H1 (cell line): ENCODE measurements at regions of chr2 and their contacts with region 1.

Region 1: GRCh38 chr2:203814661-203815540 is 52.7 kb upstream of the CTLA4 start:
- DNase-seq: no peak
- H3K4me3 ChIP-seq: no peak overlapping the region
- H3K27ac ChIP-seq: no peak overlapping the region
- H3K4me1 ChIP-seq: no peaks in the 10 kb centered on the region
- H3K27me3 ChIP-seq: no peaks in the 10 kb centered on the region
- CTCF ChIP-seq: peak in 2 of 3 experiments; percentile 60 to 79; a peak in 3 of 4 replicates
- EP300 ChIP-seq: no peak
- POLR2A ChIP-seq: no peak
- RAD21 ChIP-seq: peak; percentile 95

Region 2: GRCh38 chr2:203470371-203470770 is 344.5 kb before region 1 on chr2:
- CTCF ChIA-PET with region 1: interaction called, 10 read pairs
- POLR2A ChIA-PET with region 1: no interaction called
- DNase-seq: no peak
- H3K4me3 ChIP-seq: no peak overlapping the region
- H3K27ac ChIP-seq: no peak overlapping the region
- H3K4me1 ChIP-seq: peaks cover 0 to 2% (median 0%) of the 10 kb centered on the region in 4 experiments; a peak in 1 of 7 replicates
- H3K27me3 ChIP-seq: peaks cover 0 to 1% (median 0%) of the 10 kb centered on the region in 4 experiments; a peak in 1 of 7 replicates
- CTCF ChIP-seq: no peak
- EP300 ChIP-seq: no peak
- POLR2A ChIP-seq: no peak
- RAD21 ChIP-seq: no peak

Region 3: GRCh38 chr2:203763938-203764664 is 50.8 kb before region 1 on chr2:
- CTCF ChIA-PET with region 1: interaction called, 14 read pairs
- POLR2A ChIA-PET with region 1: no interaction called
- DNase-seq: peak in 1 of 2 experiments; percentile 53
- H3K4me3 ChIP-seq: no peak overlapping the region
- H3K27ac ChIP-seq: no peak overlapping the region
- H3K4me1 ChIP-seq: no peaks in the 10 kb centered on the region
- H3K27me3 ChIP-seq: no peaks in the 10 kb centered on the region
- CTCF ChIP-seq: peak; percentile 26 to 43 (median 33); a peak in 3 of 4 replicates
- EP300 ChIP-seq: no peak
- POLR2A ChIP-seq: no peak
- RAD21 ChIP-seq: peak; percentile 8 to 42; a peak in 2 of 4 replicates

Region 4: GRCh38 chr2:203787979-203788378 is 26.9 kb before region 1 on chr2:
- CTCF ChIA-PET with region 1: interaction called, 15 read pairs
- POLR2A ChIA-PET with region 1: no interaction called
- DNase-seq: no peak
- H3K4me3 ChIP-seq: no peak overlapping the region
- H3K27ac ChIP-seq: no peak overlapping the region
- H3K4me1 ChIP-seq: peaks cover 0 to 3% (median 0%) of the 10 kb centered on the region in 4 experiments; a peak in 1 of 7 replicates
- H3K27me3 ChIP-seq: no peaks in the 10 kb centered on the region
- CTCF ChIP-seq: no peak
- EP300 ChIP-seq: no peak
- POLR2A ChIP-seq: no peak
- RAD21 ChIP-seq: no peak

Region 5: DNA sequence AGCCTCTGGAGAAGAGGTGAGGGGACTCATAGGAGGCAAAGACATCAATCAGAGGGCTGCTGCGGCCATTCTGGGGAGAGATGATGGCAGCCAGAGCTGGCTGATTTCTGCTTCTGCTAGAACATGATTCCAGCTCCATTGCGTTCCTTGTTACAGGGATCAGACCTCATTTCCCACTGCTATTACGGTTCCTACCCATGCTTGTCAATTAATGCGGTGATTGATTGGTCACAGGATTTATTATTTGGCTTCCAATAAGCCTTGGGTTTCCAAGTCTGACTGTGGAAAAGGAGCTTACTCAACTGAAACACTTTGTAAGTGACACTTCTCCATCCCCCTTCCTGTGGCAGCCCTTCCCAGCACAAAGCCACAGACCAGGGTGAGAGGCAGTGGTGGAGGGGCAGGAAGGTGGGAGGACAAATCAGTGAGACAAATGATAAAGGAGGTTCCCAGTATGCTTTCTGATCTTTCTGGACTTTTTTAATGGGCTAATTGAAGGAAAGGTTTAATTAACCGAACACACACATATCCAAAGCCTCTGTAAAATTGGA is 25.8 kb after region 1 on chr2:
- CTCF ChIA-PET with region 1: no interaction called
- POLR2A ChIA-PET with region 1: no interaction called
- DNase-seq: no peak
- H3K4me3 ChIP-seq: no peak overlapping the region
- H3K27ac ChIP-seq: no peak overlapping the region
- H3K4me1 ChIP-seq: peaks cover 0 to 3% (median 0%) of the 10 kb centered on the region in 4 experiments; a peak in 1 of 7 replicates
- H3K27me3 ChIP-seq: no peaks in the 10 kb centered on the region
- CTCF ChIP-seq: no peak
- EP300 ChIP-seq: no peak
- POLR2A ChIP-seq: no peak
- RAD21 ChIP-seq: no peak

Region 6: DNA sequence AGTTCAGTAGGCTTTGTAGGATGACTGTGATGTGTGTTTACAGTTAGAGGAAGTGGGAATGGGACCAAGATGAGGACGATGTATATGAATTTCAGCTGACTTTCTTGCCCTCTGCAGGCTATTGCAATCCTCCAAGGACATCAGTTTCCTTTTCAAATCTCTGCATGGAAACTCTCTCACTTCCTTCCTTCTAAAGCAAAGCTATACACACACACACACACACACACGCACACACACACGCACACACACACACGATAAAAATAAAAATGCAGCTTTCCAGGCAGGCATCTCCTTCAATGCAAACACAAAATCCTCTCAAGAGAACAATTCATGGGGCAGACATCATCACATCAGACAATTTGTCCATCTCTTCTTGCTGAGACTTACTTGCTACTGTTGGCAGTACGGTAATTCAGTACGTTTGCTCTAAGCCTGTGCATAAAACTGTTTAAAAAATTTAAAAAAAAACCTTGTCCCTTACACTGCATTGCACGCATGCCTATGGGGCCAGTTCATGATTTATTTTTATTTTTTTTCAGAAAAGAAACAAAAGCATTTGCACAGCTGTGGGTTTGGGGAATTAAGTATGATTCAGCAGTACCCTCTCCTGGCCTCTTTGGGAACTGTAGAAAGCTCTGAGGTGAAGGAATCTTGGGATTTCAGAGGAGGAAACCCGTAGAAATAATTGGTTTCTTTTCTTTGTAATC is 94.5 kb after region 1 on chr2:
- CTCF ChIA-PET with region 1: interaction called, 13 read pairs
- POLR2A ChIA-PET with region 1: no interaction called
- DNase-seq: peak in 1 of 2 experiments; percentile 57
- H3K4me3 ChIP-seq: no peak overlapping the region
- H3K27ac ChIP-seq: no peak overlapping the region
- H3K4me1 ChIP-seq: no peaks in the 10 kb centered on the region
- H3K27me3 ChIP-seq: no peaks in the 10 kb centered on the region
- CTCF ChIP-seq: peak in 2 of 3 experiments; percentile 59 to 66; a peak in 3 of 4 replicates
- EP300 ChIP-seq: no peak
- POLR2A ChIP-seq: no peak
- RAD21 ChIP-seq: peak; percentile 84 to 86